Posterior vena cava (tissue), 2 donors: ENCODE measurements at regions of chr16 and their contacts with region 1.

Region 1: GRCh38 chr16:11586856-11587642 is at the start of gene LITAF:
- DNase-seq: peak; percentile 88
- total RNA-seq, gene LITAF: 70.0 to 76.4 TPM

Region 2: GRCh38 chr16:11379420-11379819 is 207.6 kb before region 1 on chr16:
- intact Hi-C with region 1: no loop called
- DNase-seq: no peak

Region 3: GRCh38 chr16:11621920-11622651 is 35.0 kb after region 1 on chr16:
- intact Hi-C with region 1: loop called in 1 of 2 experiments (anchors 5 kb)
- DNase-seq: no peak